ENCODE measurements at regions of chr17 and their contacts with region 1.

Region 1: DNA sequence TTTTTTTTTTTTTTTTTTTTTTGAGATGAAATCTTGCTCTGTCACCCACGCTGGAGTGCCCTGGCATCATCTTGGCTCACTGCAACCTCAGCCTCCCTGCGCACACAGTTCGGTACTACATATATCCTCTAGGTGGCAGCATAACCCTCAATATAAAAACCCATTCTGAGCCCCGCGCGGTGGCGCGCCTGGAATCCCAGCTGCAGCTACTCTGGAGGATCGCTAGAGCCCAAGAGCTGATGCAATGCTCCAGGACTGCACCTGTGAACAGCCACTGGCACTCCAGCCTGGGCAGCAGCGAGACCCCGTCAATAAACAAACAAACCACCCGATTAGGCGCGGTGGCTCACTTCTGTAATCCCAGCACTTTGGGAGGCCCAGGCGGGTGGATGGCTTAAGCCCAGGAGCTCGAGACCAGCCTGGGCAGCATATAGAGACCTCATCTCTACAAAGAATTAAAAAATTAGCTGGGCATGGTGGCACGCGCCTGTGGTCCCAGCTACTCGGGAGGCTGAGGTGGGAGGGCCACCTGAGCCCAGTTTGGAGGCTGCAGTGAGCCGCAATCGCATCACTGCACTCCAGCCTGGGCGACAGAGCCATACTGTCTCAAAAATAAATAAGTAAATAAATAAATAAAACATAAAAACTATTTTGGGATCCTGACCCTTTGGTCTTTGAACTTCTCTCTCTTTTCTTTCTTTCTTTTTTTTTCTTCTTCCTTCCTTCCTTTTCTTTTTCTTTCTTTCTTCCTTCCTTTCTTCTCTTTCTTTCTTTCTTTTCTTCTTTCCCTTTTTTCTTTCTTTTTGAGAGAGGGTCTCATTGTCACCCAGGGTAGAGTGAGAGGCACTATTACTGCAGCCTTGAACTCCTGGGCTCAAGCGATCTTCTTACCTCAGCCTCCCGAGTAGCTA is 15.4 kb upstream of the AKAP10 start:
- DNase-seq: peak; percentile 53 to 95
- H3K4me3 ChIP-seq: peak overlapping the region; percentile 24 to 50
- H3K27ac ChIP-seq: peak overlapping the region in 1 of 2 donors; percentile 33
- H3K4me1 ChIP-seq: peaks cover 2 to 3% of the 10 kb centered on the region in 2 donors
- H3K27me3 ChIP-seq: no peaks in the 10 kb centered on the region
- CTCF ChIP-seq: peak; percentile 63 to 78 (median 72)

Region 2: DNA sequence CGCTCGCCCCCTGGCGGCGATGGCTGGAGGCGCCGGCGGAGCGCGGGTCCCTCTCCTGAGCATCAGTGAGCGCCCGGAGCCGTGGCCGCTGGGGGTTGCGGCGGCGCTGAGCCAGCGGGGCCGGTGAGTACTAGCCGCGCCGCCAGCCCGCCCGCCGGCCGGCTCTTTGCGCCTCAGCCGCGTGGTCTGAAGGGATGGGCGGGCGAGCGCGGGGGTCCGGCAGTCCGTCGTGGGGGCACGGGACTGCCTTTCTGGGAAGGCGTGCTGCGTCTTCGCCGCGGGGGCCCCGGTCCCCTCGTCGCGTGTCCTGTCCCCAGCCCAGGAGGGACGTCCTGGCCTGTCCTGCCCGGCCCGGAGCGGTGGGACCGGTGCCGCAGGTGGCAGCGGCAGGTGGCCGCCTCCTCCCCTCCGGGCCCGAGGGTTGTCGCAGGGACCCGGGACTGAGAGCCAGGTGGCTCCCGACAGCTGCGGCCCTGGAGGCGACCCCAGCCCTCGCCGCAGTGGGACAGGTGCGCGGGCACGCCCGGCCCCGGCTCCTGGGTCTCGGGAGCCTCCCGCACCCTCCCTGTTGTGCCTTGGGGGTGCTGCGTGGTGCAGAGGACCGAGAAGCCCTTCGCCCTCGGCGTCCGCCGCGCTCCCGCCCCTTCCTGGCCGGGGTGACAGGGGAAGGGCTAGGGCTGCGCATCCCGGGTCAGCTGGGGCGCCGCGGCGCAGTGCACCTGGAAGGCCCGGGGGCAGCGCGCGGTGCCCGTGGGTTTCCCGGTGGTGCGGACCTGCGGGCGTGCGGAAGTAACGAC is 16.4 kb after region 1 on chr17 and contains the start of gene SPECC1:
- intact Hi-C with region 1: loop called (anchors 1 kb)
- DNase-seq: peak; percentile 50 to 93
- H3K4me3 ChIP-seq: peak within 1 kb of the TSS; percentile 74 to 85
- H3K27ac ChIP-seq: peak within 1 kb of the TSS; percentile 85 to 91
- H3K4me1 ChIP-seq: no peaks in the 10 kb centered on the region
- H3K27me3 ChIP-seq: no peaks in the 10 kb centered on the region
- CTCF ChIP-seq: peak in 1 of 3 experiments; percentile 99
- total RNA-seq, gene SPECC1: 76.4 TPM

Region 3: GRCh38 chr17:20073055-20073979 is 80.3 kb after region 1 on chr17:
- intact Hi-C with region 1: no loop called
- DNase-seq: peak in 1 of 2 donors; percentile 83
- H3K4me3 ChIP-seq: peak overlapping the region in 1 of 2 donors; percentile 57
- H3K27ac ChIP-seq: peak overlapping the region; percentile 66 to 82
- H3K4me1 ChIP-seq: peaks cover 3 to 35% of the 10 kb centered on the region in 2 donors
- H3K27me3 ChIP-seq: no peaks in the 10 kb centered on the region
- CTCF ChIP-seq: no peak

Region 4: DNA sequence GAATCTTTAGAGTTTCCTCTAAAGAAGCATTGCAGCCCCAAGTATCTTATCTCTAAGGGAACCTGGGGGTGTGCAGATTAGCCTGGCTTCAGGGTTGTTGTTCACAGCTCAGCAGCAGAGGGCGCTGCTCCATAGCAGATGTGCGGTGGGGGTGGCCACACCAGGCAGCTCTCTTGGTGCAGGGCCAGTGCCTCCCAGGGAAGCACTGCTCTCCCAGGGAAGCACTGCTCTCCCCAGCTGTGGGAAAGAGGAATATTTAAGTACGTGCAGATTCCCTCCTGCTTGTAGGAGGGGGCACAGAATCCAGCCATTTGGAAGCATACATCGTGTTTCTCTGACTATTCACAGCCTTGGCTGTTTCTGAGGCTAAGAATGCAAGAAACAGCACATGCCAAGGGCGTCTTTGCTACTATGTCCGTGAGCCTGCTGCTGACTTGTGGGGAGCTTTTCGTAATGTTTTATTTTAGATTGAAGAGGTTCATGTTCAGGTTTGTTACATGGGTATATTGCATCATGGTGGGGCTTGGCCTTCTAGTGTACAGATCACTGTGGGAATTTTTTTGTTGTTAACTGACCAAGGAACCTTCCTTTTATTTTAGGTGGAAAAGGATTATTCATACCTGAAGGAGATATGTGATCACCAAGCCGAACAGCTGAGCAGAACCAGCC is 233.9 kb after region 1 on chr17:
- intact Hi-C with region 1: loop called (anchors 10 kb)
- DNase-seq: peak in 1 of 2 donors; percentile 90
- H3K4me3 ChIP-seq: peak overlapping the region in 1 of 2 donors; percentile 25
- H3K27ac ChIP-seq: peak overlapping the region; percentile 68 to 74
- H3K4me1 ChIP-seq: peaks cover 7 to 34% of the 10 kb centered on the region in 2 donors
- H3K27me3 ChIP-seq: no peaks in the 10 kb centered on the region
- CTCF ChIP-seq: peak; percentile 64 to 87 (median 79)

Region 5: DNA sequence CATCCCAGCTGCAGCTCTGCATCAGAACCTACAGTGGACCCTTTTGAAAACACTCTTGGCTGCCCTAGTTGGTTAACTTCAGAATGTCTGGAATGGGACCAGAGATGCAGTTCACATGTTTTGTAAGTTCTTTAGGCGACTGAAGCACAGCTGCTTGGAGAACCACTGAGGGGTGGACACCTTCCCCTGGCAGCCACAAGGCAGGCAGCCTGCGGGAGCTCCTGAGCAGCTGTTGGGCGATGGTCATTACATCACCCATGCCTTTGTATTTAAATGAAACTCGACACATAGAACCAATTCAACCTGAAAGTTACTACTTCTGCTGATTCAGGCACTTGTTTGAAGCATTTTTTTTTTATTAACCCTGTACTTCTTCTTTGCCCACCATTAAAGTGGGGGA is 322.8 kb after region 1 on chr17:
- intact Hi-C with region 1: loop called (anchors 5 kb)
- DNase-seq: no peak
- H3K4me3 ChIP-seq: no peak overlapping the region
- H3K27ac ChIP-seq: no peak overlapping the region
- H3K4me1 ChIP-seq: peaks cover 0 to 5% of the 10 kb centered on the region in 2 donors
- H3K27me3 ChIP-seq: no peaks in the 10 kb centered on the region
- CTCF ChIP-seq: no peak

Region 6: GRCh38 chr17:20955427-20956323 is 962.6 kb after region 1 on chr17:
- intact Hi-C with region 1: no loop called
- DNase-seq: no peak
- H3K4me3 ChIP-seq: no peak overlapping the region
- H3K27ac ChIP-seq: no peak overlapping the region
- H3K4me1 ChIP-seq: no peaks in the 10 kb centered on the region
- H3K27me3 ChIP-seq: no peaks in the 10 kb centered on the region
- CTCF ChIP-seq: no peak